GM13976 (cell line): ENCODE measurements at regions of chr3 and their contacts with region 1.

Region 1: DNA sequence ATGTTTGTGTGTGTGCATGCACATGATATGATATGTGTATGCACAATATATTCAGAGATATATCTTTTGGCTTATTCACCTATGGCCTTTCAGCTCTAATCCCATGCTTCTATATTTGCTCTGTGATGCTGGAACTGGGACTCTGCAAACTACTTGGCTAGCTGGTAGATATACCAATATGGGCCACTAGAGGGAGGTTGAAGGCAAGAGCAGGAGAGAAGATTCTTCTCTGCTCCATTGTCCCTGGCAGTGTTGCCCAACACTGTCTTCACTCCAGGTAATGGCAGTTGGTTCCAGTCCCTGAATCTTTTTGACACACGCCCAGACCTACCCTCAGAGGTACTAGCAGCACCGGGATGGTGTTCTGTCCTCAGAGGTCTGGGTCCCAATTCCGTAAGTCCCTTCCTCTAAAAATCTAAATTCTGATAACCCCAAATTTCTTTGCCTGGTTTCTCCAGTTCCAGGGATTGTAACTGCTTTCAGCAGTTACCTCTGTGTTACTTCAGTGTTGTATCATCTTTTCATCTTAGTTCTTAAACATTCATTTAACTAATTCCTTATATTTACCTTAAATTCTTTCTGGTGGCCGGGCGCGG is 44.7 kb downstream of the GTPBP8 start:
- DNase-seq: peak; percentile 58
- CTCF ChIP-seq: peak; percentile 68

Region 2: GRCh38 chr3:112948346-112948838 is 87.1 kb before region 1 on chr3:
- in situ Hi-C with region 1: no loop called
- DNase-seq: no peak
- CTCF ChIP-seq: no peak

Region 3: GRCh38 chr3:113552851-113553250 is 517.4 kb after region 1 on chr3:
- in situ Hi-C with region 1: loop called (anchors 25 kb)
- DNase-seq: no peak
- CTCF ChIP-seq: peak; percentile 26